ENCODE measurements at regions of chr2 and their contacts with region 1.

Region 1: DNA sequence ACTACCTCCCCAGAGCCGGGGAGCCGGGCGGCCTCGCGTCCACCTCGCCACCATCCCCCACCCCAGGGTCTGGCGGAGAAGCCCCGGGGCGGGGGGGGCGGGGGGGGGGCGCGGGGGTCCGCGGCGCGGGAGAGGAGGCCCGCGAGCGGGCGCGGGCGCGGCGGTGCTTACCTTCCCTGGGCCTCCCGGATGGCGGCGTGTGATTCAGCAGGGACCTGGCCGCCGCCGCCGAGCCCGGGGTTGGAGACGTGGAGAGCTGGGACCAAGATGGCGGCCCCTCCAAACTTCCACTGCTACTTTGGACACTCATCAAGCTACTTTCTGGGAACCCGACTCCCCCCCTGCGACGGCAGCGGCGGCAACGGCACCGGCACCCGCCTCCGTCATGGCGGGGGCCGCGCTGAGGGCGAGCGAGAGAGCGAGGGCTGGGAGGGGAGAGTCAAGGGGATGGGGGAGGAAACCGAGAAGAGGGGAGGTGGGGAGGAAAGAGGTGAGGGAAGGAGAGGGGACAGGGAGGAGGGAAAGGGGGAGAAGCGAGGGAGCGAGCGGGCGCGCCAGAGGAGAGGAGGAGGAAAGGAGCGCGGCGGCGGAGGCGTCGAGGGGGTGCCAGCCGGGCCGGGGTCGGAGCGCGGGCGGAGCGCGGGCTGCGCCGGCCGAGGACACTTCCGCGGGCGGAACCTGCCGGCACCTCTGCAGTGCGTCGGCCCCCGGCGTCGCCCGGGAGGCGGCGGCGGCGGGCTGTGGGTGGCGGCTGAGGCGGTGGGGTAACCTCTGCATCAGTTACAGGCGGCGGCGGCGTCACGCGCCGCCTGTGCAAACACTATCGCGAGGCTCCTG is at the start of gene TLK1:
- DNase-seq: no peak
- ATAC-seq: peak; percentile 64
- H3K4me3 ChIP-seq: peak within 1 kb of the TSS; percentile 91
- H3K27ac ChIP-seq: peak within 1 kb of the TSS; percentile 96
- H3K4me1 ChIP-seq: peaks cover 20% of the 10 kb centered on the region
- H3K27me3 ChIP-seq: no peaks in the 10 kb centered on the region
- CTCF ChIP-seq: peak in 1 of 3 experiments; percentile 14; a peak in 1 of 6 replicates
- EP300 ChIP-seq: no peak
- POLR2A ChIP-seq: peak; percentile 79
- RAD21 ChIP-seq: peak; percentile 39; the same call in 1 of the 2 replicates
- polyA plus RNA-seq, gene TLK1: 42.5 to 126 TPM

Region 2: DNA sequence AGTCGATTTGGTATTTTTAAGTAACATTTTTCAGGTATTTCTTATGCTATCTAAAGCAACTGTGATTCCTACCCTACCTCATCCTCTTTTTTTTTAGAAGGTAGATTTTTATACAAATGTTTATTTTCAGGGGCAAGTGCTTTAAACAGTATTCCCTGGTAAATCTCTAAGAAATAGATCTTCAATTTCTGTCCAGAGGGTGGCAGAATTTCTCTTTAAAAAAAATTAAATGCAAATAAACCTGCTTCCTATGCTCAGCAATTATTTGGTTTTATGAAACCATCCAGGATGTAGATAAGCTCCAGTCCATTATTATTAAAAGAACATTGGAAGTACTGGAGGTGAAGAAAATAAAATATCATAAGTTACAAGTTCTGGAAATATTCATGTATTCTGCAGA is 790.4 kb before region 1 on chr2:
- CTCF ChIA-PET with region 1: no interaction called
- POLR2A ChIA-PET with region 1: no interaction called
- RAD21 ChIA-PET with region 1: no interaction called
- SMC1A ChIA-PET with region 1: no interaction called
- in situ Hi-C with region 1: no loop called
- intact Hi-C with region 1: no loop called
- DNase-seq: no peak
- ATAC-seq: 0 out of 3 replicates have a peak, but pooled peaks have one; percentile 36
- H3K4me3 ChIP-seq: no peak overlapping the region
- H3K27ac ChIP-seq: no peak overlapping the region
- H3K4me1 ChIP-seq: no peaks in the 10 kb centered on the region; the same call in 1 of the 2 replicates
- H3K27me3 ChIP-seq: no peaks in the 10 kb centered on the region; a peak in 1 of 4 replicates
- CTCF ChIP-seq: peak in 1 of 3 experiments; percentile 36; a peak in 1 of 6 replicates
- EP300 ChIP-seq: no peak
- POLR2A ChIP-seq: no peak
- RAD21 ChIP-seq: peak; percentile 24; the same call in 1 of the 2 replicates

Region 3: GRCh38 chr2:170940066-170940465 is 220.3 kb before region 1 on chr2:
- CTCF ChIA-PET with region 1: no interaction called
- POLR2A ChIA-PET with region 1: no interaction called
- RAD21 ChIA-PET with region 1: no interaction called
- SMC1A ChIA-PET with region 1: no interaction called
- in situ Hi-C with region 1: no loop called
- intact Hi-C with region 1: no loop called
- DNase-seq: no peak
- ATAC-seq: peak; percentile 63
- H3K4me3 ChIP-seq: no peak overlapping the region
- H3K27ac ChIP-seq: no peak overlapping the region
- H3K4me1 ChIP-seq: 0 out of 2 replicates have a peak, but pooled peaks cover 2% of the 10 kb centered on the region
- H3K27me3 ChIP-seq: no peaks in the 10 kb centered on the region
- CTCF ChIP-seq: no peak
- EP300 ChIP-seq: no peak
- POLR2A ChIP-seq: no peak
- RAD21 ChIP-seq: no peak

Region 4: DNA sequence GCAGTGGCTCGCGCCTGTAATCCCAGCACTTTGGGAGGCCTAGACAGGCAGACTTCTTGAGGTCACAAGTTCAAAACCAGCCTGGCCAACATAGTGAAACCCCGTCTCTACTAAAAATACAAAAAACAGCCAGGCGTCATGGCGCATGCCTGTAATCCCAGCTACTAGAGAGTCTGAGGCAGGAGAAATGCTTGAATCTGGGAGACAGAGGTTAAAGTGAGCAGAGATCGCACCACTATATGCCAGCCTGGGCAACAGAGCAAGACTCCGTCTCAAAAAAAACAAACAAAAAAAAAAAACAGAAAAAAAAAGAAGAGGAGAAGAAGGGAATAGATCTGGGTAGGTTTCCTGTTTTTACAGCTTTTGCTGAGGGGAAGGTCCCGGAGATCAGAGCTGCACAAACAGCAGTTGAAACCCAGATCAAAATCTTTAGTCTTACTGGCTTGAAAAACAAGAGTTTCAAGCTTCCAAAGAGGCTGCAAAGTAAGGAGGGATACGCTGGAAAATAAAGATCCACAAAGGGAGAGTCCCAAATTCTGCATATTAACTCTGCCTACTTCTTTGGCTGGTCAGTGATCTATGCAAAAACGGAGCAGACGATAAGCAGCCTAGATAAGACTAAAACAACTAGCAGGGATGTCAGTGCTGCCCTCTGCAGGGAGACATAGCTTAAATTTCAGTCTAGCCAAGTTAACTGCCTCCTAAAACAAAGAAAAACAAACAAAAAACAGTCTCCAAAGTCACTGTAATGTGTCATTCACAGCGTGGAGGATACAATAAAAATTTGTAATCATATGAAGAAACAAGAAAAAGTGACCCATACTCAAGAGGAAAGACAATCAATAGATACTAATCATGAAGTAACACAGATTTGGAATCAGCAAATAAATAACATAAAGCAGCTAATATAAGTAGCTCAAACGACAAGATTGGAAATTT is 73.7 kb before region 1 on chr2:
- CTCF ChIA-PET with region 1: interaction called, 62 read pairs
- POLR2A ChIA-PET with region 1: no interaction called
- RAD21 ChIA-PET with region 1: interaction called, 15 read pairs
- SMC1A ChIA-PET with region 1: interaction called, 70 read pairs
- in situ Hi-C with region 1: no loop called
- intact Hi-C with region 1: loop called (anchors 5 kb)
- DNase-seq: peak; percentile 9
- ATAC-seq: peak; percentile 91
- H3K4me3 ChIP-seq: no peak overlapping the region
- H3K27ac ChIP-seq: peak overlapping the region; percentile 17; the same call in 1 of the 2 replicates
- H3K4me1 ChIP-seq: no peaks in the 10 kb centered on the region; the same call in 1 of the 2 replicates
- H3K27me3 ChIP-seq: no peaks in the 10 kb centered on the region
- CTCF ChIP-seq: peak; percentile 45 to 64 (median 63)
- EP300 ChIP-seq: no peak
- POLR2A ChIP-seq: no peak
- RAD21 ChIP-seq: 0 out of 2 replicates have a peak, but pooled peaks have one; percentile 8

Region 5: DNA sequence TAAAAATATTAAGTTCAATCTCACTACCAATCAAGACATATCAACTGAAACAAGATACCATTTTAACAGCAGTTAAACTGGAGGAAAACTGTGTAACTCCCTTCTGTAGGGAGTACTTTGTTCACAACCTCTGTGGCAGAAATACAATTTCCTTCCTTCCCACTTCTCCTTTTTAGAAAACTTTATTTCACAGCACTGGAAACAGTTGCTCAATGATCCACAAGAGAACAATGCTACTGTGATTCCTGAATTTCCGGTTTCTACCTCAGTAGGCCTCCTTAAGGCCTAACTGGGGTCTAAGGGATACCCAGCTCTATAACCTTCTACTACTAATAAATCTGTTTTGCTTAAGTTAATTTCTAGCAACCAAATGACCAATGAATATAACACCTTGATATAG is 13.7 kb before region 1 on chr2:
- CTCF ChIA-PET with region 1: interaction called, 21 read pairs
- POLR2A ChIA-PET with region 1: interaction called, 10 read pairs
- RAD21 ChIA-PET with region 1: interaction called, 20 read pairs
- SMC1A ChIA-PET with region 1: interaction called, 64 read pairs
- in situ Hi-C with region 1: no loop called
- intact Hi-C with region 1: no loop called
- DNase-seq: no peak
- ATAC-seq: peak; percentile 49
- H3K4me3 ChIP-seq: no peak overlapping the region
- H3K27ac ChIP-seq: no peak overlapping the region; the same call in 1 of the 2 replicates
- H3K4me1 ChIP-seq: peaks cover 13% of the 10 kb centered on the region; the same call in 1 of the 2 replicates
- H3K27me3 ChIP-seq: no peaks in the 10 kb centered on the region
- CTCF ChIP-seq: no peak
- EP300 ChIP-seq: no peak; a peak in 1 of 4 replicates
- POLR2A ChIP-seq: no peak
- RAD21 ChIP-seq: no peak

Region 6: GRCh38 chr2:171237751-171238505 is 77.6 kb after region 1 on chr2:
- CTCF ChIA-PET with region 1: no interaction called
- POLR2A ChIA-PET with region 1: no interaction called
- RAD21 ChIA-PET with region 1: no interaction called
- SMC1A ChIA-PET with region 1: no interaction called
- in situ Hi-C with region 1: no loop called
- intact Hi-C with region 1: no loop called
- DNase-seq: no peak
- ATAC-seq: no peak
- H3K4me3 ChIP-seq: no peak overlapping the region
- H3K27ac ChIP-seq: no peak overlapping the region
- H3K4me1 ChIP-seq: no peaks in the 10 kb centered on the region
- H3K27me3 ChIP-seq: no peaks in the 10 kb centered on the region
- CTCF ChIP-seq: no peak
- EP300 ChIP-seq: no peak
- POLR2A ChIP-seq: no peak
- RAD21 ChIP-seq: no peak

Region 7: GRCh38 chr2:171334171-171334570 is 173.8 kb after region 1 on chr2:
- CTCF ChIA-PET with region 1: interaction called, 5 read pairs
- POLR2A ChIA-PET with region 1: interaction called, 4 read pairs
- RAD21 ChIA-PET with region 1: interaction called, 3 read pairs
- SMC1A ChIA-PET with region 1: interaction called, 14 read pairs
- in situ Hi-C with region 1: no loop called
- intact Hi-C with region 1: no loop called
- DNase-seq: no peak
- ATAC-seq: no peak
- H3K4me3 ChIP-seq: no peak overlapping the region
- H3K27ac ChIP-seq: peak overlapping the region; percentile 78
- H3K4me1 ChIP-seq: peaks cover 31% of the 10 kb centered on the region
- H3K27me3 ChIP-seq: no peaks in the 10 kb centered on the region
- CTCF ChIP-seq: no peak
- EP300 ChIP-seq: no peak
- POLR2A ChIP-seq: no peak
- RAD21 ChIP-seq: no peak

Region 8: DNA sequence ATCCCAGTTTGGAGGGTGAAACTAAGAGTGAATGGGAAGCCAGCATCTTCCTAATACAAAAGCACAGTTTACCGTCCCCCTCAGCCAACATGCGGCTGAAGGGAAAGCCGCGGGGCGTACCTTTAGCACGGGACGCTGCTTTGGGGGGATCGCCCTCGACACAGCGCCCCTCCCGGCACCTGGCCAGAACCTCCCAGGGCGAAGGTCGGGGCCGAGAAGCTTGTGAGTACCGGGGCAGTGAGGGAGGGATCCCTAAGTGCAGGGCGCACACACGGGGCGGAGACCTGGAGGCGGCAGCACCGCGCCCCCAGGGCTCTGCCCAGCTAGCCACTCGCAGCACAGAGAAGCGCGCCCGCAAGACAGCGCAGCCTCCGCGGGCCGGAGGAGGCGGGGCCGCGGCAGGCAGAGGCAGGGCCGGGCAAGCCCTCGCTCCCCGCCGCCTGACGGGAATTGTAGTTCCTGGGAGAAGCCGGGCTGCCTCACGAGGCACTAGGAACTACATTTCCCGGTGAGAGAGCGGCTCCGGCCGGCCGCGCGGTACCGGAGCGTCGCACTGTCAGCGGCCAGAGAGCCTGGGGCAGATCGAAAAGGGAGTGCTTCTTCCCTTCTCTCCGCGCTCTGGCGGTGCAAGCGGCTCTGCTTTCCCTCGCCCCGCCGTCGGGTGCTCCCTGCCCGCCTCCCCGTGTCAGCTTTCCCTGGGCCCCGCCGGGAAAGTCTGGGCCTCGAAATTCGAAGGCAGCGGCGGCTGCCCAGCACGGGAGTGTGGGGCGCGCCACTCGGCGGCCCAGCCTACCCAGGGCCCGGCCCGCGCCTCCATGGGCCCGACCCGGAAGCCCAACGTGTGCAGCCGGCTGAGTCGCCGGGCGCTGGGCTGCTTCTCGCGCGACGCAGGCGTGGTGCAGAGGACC is 273.7 kb after region 1 on chr2 and contains the starts of genes DCAF17 and METTL8:
- CTCF ChIA-PET with region 1: interaction called, 4 read pairs
- POLR2A ChIA-PET with region 1: interaction called, 7 read pairs
- RAD21 ChIA-PET with region 1: interaction called, 4 read pairs
- SMC1A ChIA-PET with region 1: interaction called, 4 read pairs
- in situ Hi-C with region 1: no loop called
- intact Hi-C with region 1: loop called (anchors 5 kb)
- DNase-seq: peak; percentile 94
- ATAC-seq: peak; percentile 94
- H3K4me3 ChIP-seq: peak within 1 kb of the TSS; percentile 81
- H3K27ac ChIP-seq: peak within 1 kb of the TSS; percentile 93
- H3K4me1 ChIP-seq: peaks cover 13% of the 10 kb centered on the region
- H3K27me3 ChIP-seq: no peaks in the 10 kb centered on the region
- CTCF ChIP-seq: peak; percentile 52 to 72 (median 61)
- EP300 ChIP-seq: no peak
- POLR2A ChIP-seq: peak; percentile 92
- RAD21 ChIP-seq: peak; percentile 33
- polyA plus RNA-seq, gene DCAF17: 5.2 to 5.6 TPM
- polyA plus RNA-seq, gene METTL8: 34.9 to 42.5 TPM